GM23248 (cell line): ENCODE measurements at regions of chr9 and their contacts with region 1.

Region 1: GRCh38 chr9:2857564-2858198 is 13.8 kb upstream of the PUM3 start:
- DNase-seq: peak; percentile 83
- H3K4me3 ChIP-seq: no peak overlapping the region
- H3K27ac ChIP-seq: no peak overlapping the region
- H3K4me1 ChIP-seq: peaks cover 3% of the 10 kb centered on the region; the same call in 1 of the 2 replicates
- H3K27me3 ChIP-seq: no peaks in the 10 kb centered on the region

Region 2: GRCh38 chr9:3441197-3441816 is 583.6 kb after region 1 on chr9:
- in situ Hi-C with region 1: loop called (anchors 10 kb)
- DNase-seq: peak; percentile 75
- H3K4me3 ChIP-seq: no peak overlapping the region
- H3K27ac ChIP-seq: no peak overlapping the region
- H3K4me1 ChIP-seq: peaks cover 7% of the 10 kb centered on the region
- H3K27me3 ChIP-seq: no peaks in the 10 kb centered on the region

Region 3: DNA sequence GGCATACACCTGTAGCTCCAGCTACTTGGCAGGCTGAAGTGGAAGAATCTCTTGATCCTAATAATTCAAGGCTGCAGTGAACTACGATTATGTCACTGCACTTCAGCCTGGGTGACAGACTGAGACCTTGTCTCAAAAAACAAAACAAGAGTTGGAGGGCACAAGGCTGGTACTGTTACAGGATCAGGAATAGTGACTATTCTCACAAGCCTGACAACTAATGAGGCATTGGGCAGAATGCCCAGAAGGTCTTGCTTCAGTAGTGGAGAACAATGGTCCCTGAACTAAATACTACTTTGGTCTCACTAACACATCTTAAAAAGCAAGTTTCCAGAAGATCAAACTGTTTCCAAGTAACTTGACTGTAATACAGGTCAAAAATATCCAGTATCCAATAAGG is 851.1 kb after region 1 on chr9:
- in situ Hi-C with region 1: loop called (anchors 25 kb)
- DNase-seq: peak; percentile 32
- H3K4me3 ChIP-seq: no peak overlapping the region
- H3K27ac ChIP-seq: no peak overlapping the region
- H3K4me1 ChIP-seq: no peaks in the 10 kb centered on the region
- H3K27me3 ChIP-seq: peaks cover 24% of the 10 kb centered on the region

Region 4: DNA sequence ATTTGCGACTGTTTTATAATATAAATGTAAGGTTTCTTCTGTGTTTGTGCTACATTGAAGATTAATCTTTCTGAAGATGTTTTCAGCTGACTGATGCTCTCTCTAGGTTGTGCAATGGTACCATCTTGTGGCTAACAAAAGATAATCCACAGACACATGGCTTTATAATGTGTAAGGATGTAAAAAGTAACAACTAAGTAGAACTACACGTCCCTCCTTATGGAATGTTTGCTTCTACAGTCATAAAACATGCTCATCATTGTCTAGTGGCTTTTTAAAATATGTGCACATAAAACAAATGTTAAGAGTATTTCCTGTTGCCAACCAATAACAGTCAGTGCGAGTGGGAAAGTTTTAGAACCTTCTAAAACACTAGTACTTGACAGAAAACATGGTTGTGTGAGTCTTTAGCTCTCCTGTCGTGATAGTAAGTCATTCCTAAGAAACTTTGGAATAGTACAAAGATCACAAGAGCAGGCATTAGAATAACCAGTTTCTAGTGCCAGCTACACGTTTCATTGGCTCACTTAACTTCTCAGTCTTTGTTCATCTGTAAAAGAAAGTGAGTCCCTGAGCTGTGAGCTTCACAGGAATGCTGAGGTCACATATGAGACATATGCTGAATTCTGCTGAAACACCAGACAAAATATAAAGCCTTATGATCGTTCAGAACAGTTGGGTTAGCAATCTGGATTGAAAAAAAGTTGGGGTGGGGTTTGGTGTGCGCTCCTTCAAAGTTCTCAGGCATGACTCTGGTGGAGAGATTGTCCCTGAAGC is 1517.9 kb after region 1 on chr9:
- in situ Hi-C with region 1: loop called (anchors 10 kb)
- DNase-seq: peak; percentile 89
- H3K4me3 ChIP-seq: peak overlapping the region; percentile 45
- H3K27ac ChIP-seq: peak overlapping the region; percentile 79
- H3K4me1 ChIP-seq: peaks cover 28% of the 10 kb centered on the region
- H3K27me3 ChIP-seq: no peaks in the 10 kb centered on the region

Region 5: GRCh38 chr9:4640027-4640426 is 1782.3 kb after region 1 on chr9:
- in situ Hi-C with region 1: loop called (anchors 25 kb)
- DNase-seq: peak; percentile 46
- H3K4me3 ChIP-seq: no peak overlapping the region
- H3K27ac ChIP-seq: no peak overlapping the region
- H3K4me1 ChIP-seq: no peaks in the 10 kb centered on the region
- H3K27me3 ChIP-seq: no peaks in the 10 kb centered on the region